ENCODE measurements at regions of chr12 and their contacts with region 1.

Region 1: GRCh38 chr12:52023182-52023975 is 16.6 kb downstream of the TAMALIN start:
- DNase-seq: peak; percentile 89 to 95
- H3K4me3 ChIP-seq: peak overlapping the region; percentile 75
- H3K4me3 Mint-ChIP-seq: peak overlapping the region; percentile 90
- H3K27ac Mint-ChIP-seq: no peak overlapping the region
- H3K4me1 ChIP-seq: peaks cover 12% of the 10 kb centered on the region; the same call in 1 of the 2 replicates
- H3K4me1 Mint-ChIP-seq: peaks cover 33% of the 10 kb centered on the region
- H3K27me3 ChIP-seq: no peaks in the 10 kb centered on the region
- H3K27me3 Mint-ChIP-seq: no peaks in the 10 kb centered on the region
- CTCF ChIP-seq: peak; percentile 96

Region 2: GRCh38 chr12:51871126-51871525 is 152.3 kb before region 1 on chr12:
- CTCF ChIA-PET with region 1: interaction called, 10 read pairs
- POLR2A ChIA-PET with region 1: no interaction called
- intact Hi-C with region 1: no loop called
- DNase-seq: no peak
- H3K4me3 ChIP-seq: no peak overlapping the region
- H3K4me3 Mint-ChIP-seq: no peak overlapping the region
- H3K27ac Mint-ChIP-seq: no peak overlapping the region
- H3K4me1 ChIP-seq: peaks cover 16% of the 10 kb centered on the region
- H3K4me1 Mint-ChIP-seq: peaks cover 29% of the 10 kb centered on the region
- H3K27me3 ChIP-seq: no peaks in the 10 kb centered on the region
- H3K27me3 Mint-ChIP-seq: no peaks in the 10 kb centered on the region
- CTCF ChIP-seq: no peak

Region 3: DNA sequence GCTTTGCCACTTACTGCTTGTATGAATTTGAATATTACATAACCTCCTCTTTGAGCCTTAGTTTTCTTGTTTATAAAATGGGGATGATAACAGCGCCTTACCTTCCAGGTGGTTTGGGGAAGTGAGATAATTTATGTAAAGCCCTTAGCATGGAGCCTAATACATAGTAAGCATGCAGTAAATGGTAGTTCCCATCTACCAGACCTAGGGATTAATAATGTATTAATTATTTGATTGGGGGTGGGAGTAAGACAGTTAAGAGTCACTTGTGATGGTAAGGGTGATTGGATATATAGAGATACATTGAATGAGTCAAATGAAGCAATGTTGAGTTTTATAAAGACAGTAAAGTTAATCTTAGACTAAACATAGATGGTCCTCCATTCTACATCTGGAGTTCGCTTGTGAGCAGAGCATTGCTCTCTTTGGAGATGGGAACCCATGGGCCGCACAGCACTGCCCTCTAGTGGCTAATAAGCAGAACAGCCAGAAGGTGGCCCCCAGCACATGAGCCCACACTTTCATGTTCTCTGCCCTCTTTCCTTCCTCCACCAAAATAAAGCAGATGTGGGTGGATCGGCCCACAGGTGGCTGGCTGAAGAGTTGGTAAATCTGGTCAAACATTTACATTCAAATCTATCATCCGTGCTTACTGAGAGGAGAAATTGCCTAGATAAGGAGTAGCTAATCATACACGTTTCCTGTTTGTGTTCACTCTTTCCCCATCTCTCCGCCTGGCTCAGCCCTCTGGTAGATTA is 43.1 kb before region 1 on chr12:
- CTCF ChIA-PET with region 1: interaction called, 9 read pairs
- POLR2A ChIA-PET with region 1: interaction called, 17 read pairs
- intact Hi-C with region 1: no loop called
- DNase-seq: peak; percentile 70 to 82
- H3K4me3 ChIP-seq: no peak overlapping the region
- H3K4me3 Mint-ChIP-seq: peak overlapping the region; percentile 32
- H3K27ac Mint-ChIP-seq: peak overlapping the region; percentile 87
- H3K4me1 ChIP-seq: peaks cover 52% of the 10 kb centered on the region
- H3K4me1 Mint-ChIP-seq: peaks cover 46% of the 10 kb centered on the region
- H3K27me3 ChIP-seq: no peaks in the 10 kb centered on the region
- H3K27me3 Mint-ChIP-seq: no peaks in the 10 kb centered on the region
- CTCF ChIP-seq: peak; percentile 96 to 97

Region 4: DNA sequence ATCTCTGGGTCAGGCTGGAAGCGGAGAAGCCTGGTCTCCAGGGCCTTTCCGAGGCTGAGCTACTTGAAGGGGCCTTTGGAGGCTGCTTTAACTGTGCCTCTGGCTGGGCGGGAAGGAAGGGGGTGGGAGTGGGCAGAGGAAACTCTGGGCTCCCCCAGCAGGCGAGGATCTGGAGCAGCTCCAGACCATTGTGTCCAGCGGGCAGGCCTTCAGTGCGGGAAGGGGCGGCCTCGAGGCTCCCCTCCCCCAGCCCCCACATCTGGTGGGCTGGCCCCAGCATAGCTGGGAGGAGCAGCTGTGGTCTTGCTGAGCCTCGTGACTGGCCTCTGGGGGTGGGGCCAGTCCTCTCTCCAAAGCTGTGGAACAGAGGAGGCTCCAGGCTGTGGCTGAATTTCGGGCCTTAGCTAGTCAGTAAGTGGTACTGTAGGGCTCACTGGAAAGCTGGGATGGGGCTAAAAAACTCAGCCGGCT is 13.2 kb before region 1 on chr12:
- CTCF ChIA-PET with region 1: interaction called, 69 read pairs
- POLR2A ChIA-PET with region 1: interaction called, 7 read pairs
- intact Hi-C with region 1: no loop called
- DNase-seq: peak in 1 of 2 experiments; percentile 26
- H3K4me3 ChIP-seq: no peak overlapping the region
- H3K4me3 Mint-ChIP-seq: no peak overlapping the region
- H3K27ac Mint-ChIP-seq: no peak overlapping the region
- H3K4me1 ChIP-seq: no peaks in the 10 kb centered on the region
- H3K4me1 Mint-ChIP-seq: no peaks in the 10 kb centered on the region
- H3K27me3 ChIP-seq: no peaks in the 10 kb centered on the region
- H3K27me3 Mint-ChIP-seq: no peaks in the 10 kb centered on the region
- CTCF ChIP-seq: no peak

Region 5: DNA sequence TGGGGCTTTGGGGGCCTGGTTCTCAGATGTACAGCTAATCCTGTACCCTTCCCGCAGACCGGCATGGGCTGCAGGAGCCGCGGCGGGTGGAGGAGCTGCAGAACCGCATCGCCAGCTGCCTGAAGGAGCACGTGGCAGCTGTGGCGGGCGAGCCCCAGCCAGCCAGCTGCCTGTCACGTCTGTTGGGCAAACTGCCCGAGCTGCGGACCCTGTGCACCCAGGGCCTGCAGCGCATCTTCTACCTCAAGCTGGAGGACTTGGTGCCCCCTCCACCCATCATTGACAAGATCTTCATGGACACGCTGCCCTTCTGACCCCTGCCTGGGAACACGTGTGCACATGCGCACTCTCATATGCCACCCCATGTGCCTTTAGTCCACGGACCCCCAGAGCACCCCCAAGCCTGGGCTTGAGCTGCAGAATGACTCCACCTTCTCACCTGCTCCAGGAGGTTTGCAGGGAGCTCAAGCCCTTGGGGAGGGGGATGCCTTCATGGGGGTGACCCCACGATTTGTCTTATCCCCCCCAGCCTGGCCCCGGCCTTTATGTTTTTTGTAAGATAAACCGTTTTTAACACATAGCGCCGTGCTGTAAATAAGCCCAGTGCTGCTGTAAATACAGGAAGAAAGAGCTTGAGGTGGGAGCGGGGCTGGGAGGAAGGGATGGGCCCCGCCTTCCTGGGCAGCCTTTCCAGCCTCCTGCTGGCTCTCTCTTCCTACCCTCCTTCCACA is 35.4 kb after region 1 on chr12:
- CTCF ChIA-PET with region 1: interaction called, 25 read pairs
- POLR2A ChIA-PET with region 1: no interaction called
- intact Hi-C with region 1: no loop called
- DNase-seq: no peak
- H3K4me3 ChIP-seq: no peak overlapping the region
- H3K4me3 Mint-ChIP-seq: no peak overlapping the region
- H3K27ac Mint-ChIP-seq: no peak overlapping the region
- H3K4me1 ChIP-seq: no peaks in the 10 kb centered on the region
- H3K4me1 Mint-ChIP-seq: no peaks in the 10 kb centered on the region
- H3K27me3 ChIP-seq: no peaks in the 10 kb centered on the region
- H3K27me3 Mint-ChIP-seq: no peaks in the 10 kb centered on the region
- CTCF ChIP-seq: no peak

Region 6: GRCh38 chr12:52082988-52083637 is 59.7 kb after region 1 on chr12:
- CTCF ChIA-PET with region 1: interaction called, 102 read pairs
- POLR2A ChIA-PET with region 1: interaction called, 4 read pairs
- intact Hi-C with region 1: loop called (anchors 1 kb)
- DNase-seq: peak; percentile 68 to 82
- H3K4me3 ChIP-seq: no peak overlapping the region
- H3K4me3 Mint-ChIP-seq: no peak overlapping the region
- H3K27ac Mint-ChIP-seq: no peak overlapping the region
- H3K4me1 ChIP-seq: no peaks in the 10 kb centered on the region
- H3K4me1 Mint-ChIP-seq: peaks cover 7% of the 10 kb centered on the region
- H3K27me3 ChIP-seq: no peaks in the 10 kb centered on the region
- H3K27me3 Mint-ChIP-seq: no peaks in the 10 kb centered on the region
- CTCF ChIP-seq: peak; percentile 98